Activated naive CD4-positive, alpha-beta T cell treated with anti-CD3 and anti-CD28 coated beads for 36 hours (primary cell): ENCODE measurements at regions of chr1 and their contacts with region 1.

Region 1: GRCh38 chr1:91754348-91754747 is 131.6 kb downstream of the TGFBR3 start:
- DNase-seq: peak; percentile 81
- H3K4me3 Mint-ChIP-seq: no peak overlapping the region
- H3K27ac Mint-ChIP-seq: peak overlapping the region; percentile 70
- H3K4me1 Mint-ChIP-seq: peaks cover 37% of the 10 kb centered on the region
- H3K27me3 Mint-ChIP-seq: peaks cover 4% of the 10 kb centered on the region

Region 2: DNA sequence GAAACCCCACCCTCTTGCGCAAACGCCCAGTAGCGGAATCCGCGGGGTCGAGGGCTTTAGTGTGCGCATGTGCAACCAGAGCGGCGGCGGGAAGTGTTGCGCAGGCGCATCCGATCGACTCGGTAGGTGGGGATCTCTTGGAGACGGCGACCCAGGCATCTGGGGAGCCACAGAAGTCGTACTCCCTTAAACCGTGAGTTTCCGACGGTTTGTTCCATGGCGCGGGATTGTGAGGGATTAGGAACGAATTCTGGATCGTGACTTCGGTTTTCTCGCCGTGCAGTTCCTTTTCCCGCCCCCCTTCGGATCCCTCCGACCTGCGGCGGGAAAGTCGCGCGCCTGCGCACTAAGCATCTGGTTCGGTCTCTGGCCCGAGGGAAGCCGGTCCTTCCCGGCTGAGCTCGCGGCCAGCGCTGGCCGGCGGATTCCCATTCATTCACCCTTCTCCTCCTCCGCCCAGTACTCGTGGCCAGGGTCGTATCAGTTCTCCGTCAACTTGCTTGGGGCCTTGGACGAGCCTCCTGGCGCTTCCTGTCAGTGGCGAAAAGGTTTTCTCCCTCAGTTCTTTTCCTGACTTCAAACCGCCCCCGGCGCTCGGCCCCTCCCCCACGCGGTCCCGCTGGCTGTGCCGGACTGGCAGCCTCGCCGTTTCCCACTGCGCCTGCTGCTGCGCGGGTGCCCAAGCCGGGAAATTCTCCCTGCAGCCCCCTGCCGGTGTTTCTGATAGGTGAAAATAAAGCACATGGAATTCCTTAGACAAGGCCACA is 253.4 kb before region 1 on chr1 and contains the start of gene CDC7:
- CTCF ChIA-PET with region 1: no interaction called
- intact Hi-C with region 1: loop called (anchors 2 kb)
- DNase-seq: peak; percentile 87
- H3K4me3 Mint-ChIP-seq: no peak within 1 kb of the TSS
- H3K27ac Mint-ChIP-seq: no peak within 1 kb of the TSS
- H3K4me1 Mint-ChIP-seq: peaks cover 15% of the 10 kb centered on the region
- H3K27me3 Mint-ChIP-seq: no peaks in the 10 kb centered on the region
- total RNA-seq, gene CDC7: 27.0 TPM

Region 3: GRCh38 chr1:91635763-91636162 is 118.6 kb before region 1 on chr1:
- CTCF ChIA-PET with region 1: no interaction called
- intact Hi-C with region 1: no loop called
- DNase-seq: no peak
- H3K4me3 Mint-ChIP-seq: no peak overlapping the region
- H3K27ac Mint-ChIP-seq: no peak overlapping the region
- H3K4me1 Mint-ChIP-seq: no peaks in the 10 kb centered on the region
- H3K27me3 Mint-ChIP-seq: no peaks in the 10 kb centered on the region

Region 4: GRCh38 chr1:91650764-91651163 is 103.6 kb before region 1 on chr1:
- CTCF ChIA-PET with region 1: no interaction called
- intact Hi-C with region 1: no loop called
- DNase-seq: peak; percentile 17
- H3K4me3 Mint-ChIP-seq: no peak overlapping the region
- H3K27ac Mint-ChIP-seq: no peak overlapping the region
- H3K4me1 Mint-ChIP-seq: peaks cover 13% of the 10 kb centered on the region
- H3K27me3 Mint-ChIP-seq: no peaks in the 10 kb centered on the region

Region 5: DNA sequence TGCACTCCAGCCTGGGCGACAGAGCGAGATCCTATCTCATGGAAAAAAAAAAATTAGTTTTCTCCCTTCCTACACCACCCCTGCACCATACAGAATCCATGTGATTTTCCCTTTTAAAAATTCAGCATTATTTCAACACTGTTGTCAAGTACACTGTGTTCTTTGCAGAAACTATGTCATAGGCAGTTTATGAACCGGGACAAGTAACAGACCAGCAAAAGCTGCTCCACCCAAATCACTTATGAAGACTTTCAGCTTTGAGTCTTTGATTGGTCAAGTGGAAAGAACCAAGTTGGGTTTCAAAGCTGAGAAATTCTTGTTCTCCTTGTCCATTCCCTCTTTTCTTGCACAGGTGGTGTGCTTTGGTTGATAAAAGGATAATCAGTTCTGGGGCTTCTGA is 80.7 kb before region 1 on chr1:
- CTCF ChIA-PET with region 1: no interaction called
- intact Hi-C with region 1: loop called (anchors 1 kb)
- DNase-seq: no peak
- H3K4me3 Mint-ChIP-seq: no peak overlapping the region
- H3K27ac Mint-ChIP-seq: peak overlapping the region; percentile 73
- H3K4me1 Mint-ChIP-seq: peaks cover 28% of the 10 kb centered on the region
- H3K27me3 Mint-ChIP-seq: no peaks in the 10 kb centered on the region

Region 6: GRCh38 chr1:91712981-91713841 is 41.1 kb before region 1 on chr1:
- CTCF ChIA-PET with region 1: no interaction called
- intact Hi-C with region 1: loop called (anchors 1 kb)
- DNase-seq: peak; percentile 71
- H3K4me3 Mint-ChIP-seq: no peak overlapping the region
- H3K27ac Mint-ChIP-seq: peak overlapping the region; percentile 73
- H3K4me1 Mint-ChIP-seq: peaks cover 25% of the 10 kb centered on the region
- H3K27me3 Mint-ChIP-seq: no peaks in the 10 kb centered on the region

Region 7: DNA sequence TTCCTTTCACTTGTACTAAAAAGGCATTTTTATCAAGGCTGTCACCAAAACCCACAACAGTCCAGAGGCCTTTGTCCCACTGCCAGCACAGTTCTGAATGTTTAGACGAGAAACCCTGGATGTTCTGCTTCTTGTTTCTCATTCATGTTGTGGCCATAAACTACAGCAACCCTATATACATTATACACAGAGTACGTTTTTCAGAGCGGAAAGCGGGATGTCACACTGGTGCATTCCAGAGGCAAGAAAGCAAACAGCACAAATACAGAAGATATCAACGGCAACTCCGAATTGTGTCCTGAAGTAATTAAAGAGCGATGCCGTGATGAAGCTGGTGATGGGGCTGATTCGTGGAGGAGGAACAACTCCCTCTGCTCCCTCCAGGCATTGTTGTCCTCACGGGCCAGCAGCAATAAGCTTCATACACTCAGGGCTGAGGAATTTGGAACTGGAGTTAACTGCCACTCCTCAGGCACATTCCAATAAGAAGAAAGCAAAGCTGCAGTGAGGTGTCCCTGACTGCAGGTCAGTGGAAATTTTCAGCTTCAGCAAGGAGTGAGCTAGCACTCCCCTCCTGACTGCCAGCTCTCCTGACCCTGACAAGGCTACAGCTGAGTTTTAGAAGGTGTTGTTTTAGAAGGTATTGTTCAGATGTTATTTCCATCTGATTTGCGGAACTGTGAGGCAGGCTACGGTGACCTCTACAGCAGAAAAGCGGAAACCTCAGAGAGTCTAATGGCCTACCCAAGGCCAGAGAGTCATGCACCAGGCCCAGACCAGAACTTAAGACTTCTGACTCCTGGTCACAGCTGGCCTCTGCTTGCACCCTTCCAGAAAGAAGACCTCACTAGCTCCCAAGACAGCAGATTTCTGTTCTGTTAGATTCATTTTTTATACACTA is 17.4 kb before region 1 on chr1:
- CTCF ChIA-PET with region 1: no interaction called
- intact Hi-C with region 1: no loop called
- DNase-seq: no peak
- H3K4me3 Mint-ChIP-seq: no peak overlapping the region
- H3K27ac Mint-ChIP-seq: no peak overlapping the region
- H3K4me1 Mint-ChIP-seq: peaks cover 10% of the 10 kb centered on the region
- H3K27me3 Mint-ChIP-seq: no peaks in the 10 kb centered on the region

Region 8: GRCh38 chr1:91876040-91876470 is 121.7 kb after region 1 on chr1:
- CTCF ChIA-PET with region 1: interaction called, 3 read pairs
- intact Hi-C with region 1: loop called (anchors 1 kb)
- DNase-seq: peak; percentile 61
- H3K4me3 Mint-ChIP-seq: no peak overlapping the region
- H3K27ac Mint-ChIP-seq: peak overlapping the region; percentile 5
- H3K4me1 Mint-ChIP-seq: peaks cover 74% of the 10 kb centered on the region
- H3K27me3 Mint-ChIP-seq: no peaks in the 10 kb centered on the region

Region 9: GRCh38 chr1:92277105-92277723 is 522.9 kb after region 1 on chr1:
- CTCF ChIA-PET with region 1: no interaction called
- intact Hi-C with region 1: no loop called
- DNase-seq: no peak
- H3K4me3 Mint-ChIP-seq: no peak overlapping the region
- H3K27ac Mint-ChIP-seq: no peak overlapping the region
- H3K4me1 Mint-ChIP-seq: peaks cover 3% of the 10 kb centered on the region
- H3K27me3 Mint-ChIP-seq: no peaks in the 10 kb centered on the region

Region 10: GRCh38 chr1:92583821-92584760 is 829.7 kb after region 1 on chr1:
- CTCF ChIA-PET with region 1: no interaction called
- intact Hi-C with region 1: loop called (anchors 5 kb)
- DNase-seq: no peak
- H3K4me3 Mint-ChIP-seq: peak overlapping the region; percentile 45
- H3K27ac Mint-ChIP-seq: peak overlapping the region; percentile 88
- H3K4me1 Mint-ChIP-seq: peaks cover 72% of the 10 kb centered on the region
- H3K27me3 Mint-ChIP-seq: no peaks in the 10 kb centered on the region